Heart right ventricle (tissue), 16 donors: ENCODE measurements at regions of chr13 and their contacts with region 1.

Region 1: GRCh38 chr13:20182231-20182846 is 10.4 kb downstream of the GJB2 start:
- DNase-seq: no peak
- ATAC-seq: peak; percentile 72 to 87 (median 79)
- H3K4me3 ChIP-seq: no peak overlapping the region
- H3K27ac ChIP-seq: no peak overlapping the region
- H3K4me1 ChIP-seq: peaks cover 0 to 10% (median 3%) of the 10 kb centered on the region in 9 donors
- H3K27me3 ChIP-seq: peaks cover 0 to 62% (median 40%) of the 10 kb centered on the region in 7 donors
- CTCF ChIP-seq: peak; percentile 60 to 88 (median 81)

Region 2: GRCh38 chr13:20489185-20489820 is 307.0 kb after region 1 on chr13:
- intact Hi-C with region 1: loop called in 5 of 10 experiments (anchors 5 kb)
- DNase-seq: no peak
- ATAC-seq: peak in 4 of 8 donors; percentile 64 to 89 (median 69)
- H3K4me3 ChIP-seq: no peak overlapping the region
- H3K27ac ChIP-seq: no peak overlapping the region
- H3K4me1 ChIP-seq: peaks cover 0 to 12% (median 0%) of the 10 kb centered on the region in 9 donors
- H3K27me3 ChIP-seq: no peaks in the 10 kb centered on the region
- CTCF ChIP-seq: peak in 7 of 9 donors; percentile 4 to 64 (median 46)

Region 3: GRCh38 chr13:20924758-20925394 is 742.5 kb after region 1 on chr13:
- intact Hi-C with region 1: loop called in 6 of 10 experiments (anchors 5 to 10 kb)
- DNase-seq: peak; percentile 46 to 80
- ATAC-seq: peak in 3 of 8 donors; percentile 48 to 61 (median 58)
- H3K4me3 ChIP-seq: no peak overlapping the region
- H3K27ac ChIP-seq: no peak overlapping the region
- H3K4me1 ChIP-seq: no peaks in the 10 kb centered on the region
- H3K27me3 ChIP-seq: no peaks in the 10 kb centered on the region
- CTCF ChIP-seq: peak; percentile 40 to 90 (median 83)